H1 (cell line): ENCODE measurements at regions of chrX and their contacts with region 1.

Region 1: GRCh38 chrX:68183612-68184214 is 249.6 kb downstream of the OPHN1 start:
- DNase-seq: no peak
- H3K4me3 ChIP-seq: no peak overlapping the region
- H3K27ac ChIP-seq: no peak overlapping the region
- H3K4me1 ChIP-seq: no peaks in the 10 kb centered on the region
- H3K27me3 ChIP-seq: no peaks in the 10 kb centered on the region
- CTCF ChIP-seq: peak in 1 of 3 experiments; percentile 26; a peak in 2 of 4 replicates
- EP300 ChIP-seq: no peak
- POLR2A ChIP-seq: no peak
- RAD21 ChIP-seq: peak; percentile 50 to 53

Region 2: GRCh38 chrX:68196939-68197791 is 13.5 kb after region 1 on chrX:
- CTCF ChIA-PET with region 1: interaction called, 11 read pairs
- POLR2A ChIA-PET with region 1: no interaction called
- DNase-seq: peak in 1 of 2 experiments; percentile 33
- H3K4me3 ChIP-seq: no peak overlapping the region
- H3K27ac ChIP-seq: no peak overlapping the region
- H3K4me1 ChIP-seq: peaks cover 0 to 3% (median 0%) of the 10 kb centered on the region in 4 experiments; a peak in 2 of 7 replicates
- H3K27me3 ChIP-seq: no peaks in the 10 kb centered on the region
- CTCF ChIP-seq: peak in 2 of 3 experiments; percentile 66; a peak in 3 of 4 replicates
- EP300 ChIP-seq: no peak
- POLR2A ChIP-seq: no peak
- RAD21 ChIP-seq: peak; percentile 92